ENCODE measurements at regions of chr19 and their contacts with region 1.

Region 1: GRCh38 chr19:39021063-39021462 is 11.3 kb downstream of the FBXO27 start:
- DNase-seq: peak; percentile 48
- ATAC-seq: peak; percentile 95
- H3K4me3 ChIP-seq: no peak overlapping the region
- H3K27ac ChIP-seq: no peak overlapping the region
- H3K4me1 ChIP-seq: peaks cover 23% of the 10 kb centered on the region
- H3K27me3 ChIP-seq: no peaks in the 10 kb centered on the region
- CTCF ChIP-seq: no peak
- EP300 ChIP-seq: peak; percentile 63 to 76; a peak in 3 of 4 replicates
- POLR2A ChIP-seq: no peak
- RAD21 ChIP-seq: no peak

Region 2: GRCh38 chr19:38095411-38096308 is 925.4 kb before region 1 on chr19:
- CTCF ChIA-PET with region 1: no interaction called
- POLR2A ChIA-PET with region 1: no interaction called
- RAD21 ChIA-PET with region 1: no interaction called
- SMC1A ChIA-PET with region 1: no interaction called
- in situ Hi-C with region 1: no loop called
- intact Hi-C with region 1: no loop called
- DNase-seq: peak; percentile 17
- ATAC-seq: peak; percentile 87
- H3K4me3 ChIP-seq: no peak overlapping the region
- H3K27ac ChIP-seq: peak overlapping the region; percentile 25; the same call in 1 of the 2 replicates
- H3K4me1 ChIP-seq: no peaks in the 10 kb centered on the region; the same call in 1 of the 2 replicates
- H3K27me3 ChIP-seq: no peaks in the 10 kb centered on the region
- CTCF ChIP-seq: peak; percentile 60 to 69 (median 64)
- EP300 ChIP-seq: no peak
- POLR2A ChIP-seq: no peak
- RAD21 ChIP-seq: peak; percentile 53

Region 3: DNA sequence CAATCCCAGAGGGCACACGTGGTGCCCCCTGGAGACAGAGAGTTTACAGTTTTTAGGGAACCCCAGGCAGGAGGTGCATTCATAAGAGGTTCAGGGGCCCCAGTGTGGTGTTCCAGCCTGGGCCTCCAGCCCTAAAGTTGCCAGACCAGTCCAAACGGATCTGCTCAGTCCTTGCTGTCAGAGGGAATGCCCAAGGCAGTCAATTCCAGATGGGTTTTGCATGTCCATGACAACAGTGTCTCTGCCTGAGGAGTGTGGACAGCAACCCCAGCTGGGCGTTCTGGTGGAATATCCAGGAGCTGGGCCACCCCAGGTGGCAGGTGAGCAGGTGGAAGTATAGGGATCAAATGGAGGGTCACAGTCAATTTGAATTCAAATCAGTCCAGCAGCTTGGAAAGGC is 14.0 kb before region 1 on chr19:
- CTCF ChIA-PET with region 1: interaction called, 4 read pairs
- POLR2A ChIA-PET with region 1: interaction called, 10 read pairs
- RAD21 ChIA-PET with region 1: interaction called, 3 read pairs
- SMC1A ChIA-PET with region 1: interaction called, 18 read pairs
- in situ Hi-C with region 1: no loop called
- intact Hi-C with region 1: loop called (anchors 2 kb)
- DNase-seq: no peak
- ATAC-seq: peak; percentile 21
- H3K4me3 ChIP-seq: no peak overlapping the region
- H3K27ac ChIP-seq: 0 out of 2 replicates have a peak overlapping the region, but pooled peaks have one; percentile 35
- H3K4me1 ChIP-seq: peaks cover 27% of the 10 kb centered on the region
- H3K27me3 ChIP-seq: no peaks in the 10 kb centered on the region
- CTCF ChIP-seq: no peak
- EP300 ChIP-seq: no peak
- POLR2A ChIP-seq: no peak
- RAD21 ChIP-seq: no peak

Region 4: GRCh38 chr19:39031368-39032062 is 10.5 kb after region 1 on chr19:
- CTCF ChIA-PET with region 1: interaction called, 5 read pairs
- POLR2A ChIA-PET with region 1: interaction called, 16 read pairs
- RAD21 ChIA-PET with region 1: interaction called, 7 read pairs
- SMC1A ChIA-PET with region 1: interaction called, 10 read pairs
- in situ Hi-C with region 1: no loop called
- intact Hi-C with region 1: no loop called
- DNase-seq: peak; percentile 60
- ATAC-seq: peak; percentile 94
- H3K4me3 ChIP-seq: peak overlapping the region; percentile 72
- H3K27ac ChIP-seq: no peak overlapping the region
- H3K4me1 ChIP-seq: peaks cover 6% of the 10 kb centered on the region; the same call in 1 of the 2 replicates
- H3K27me3 ChIP-seq: no peaks in the 10 kb centered on the region
- CTCF ChIP-seq: no peak
- EP300 ChIP-seq: no peak
- POLR2A ChIP-seq: no peak; the same call in 1 of the 2 replicates
- RAD21 ChIP-seq: no peak

Measured in GM12878 (cell line).